GM12878 (cell line): ENCODE measurements at regions of chr1 and their contacts with region 1.

Region 1: GRCh38 chr1:183070923-183071618 is 47.9 kb downstream of the LAMC1 start:
- DNase-seq: peak; percentile 94
- ATAC-seq: peak; percentile 90
- H3K4me3 ChIP-seq: peak overlapping the region; percentile 64
- H3K27ac ChIP-seq: peak overlapping the region; percentile 82
- H3K4me1 ChIP-seq: peaks cover 27% of the 10 kb centered on the region; the same call in 1 of the 2 replicates
- H3K27me3 ChIP-seq: no peaks in the 10 kb centered on the region
- CTCF ChIP-seq: peak in 1 of 3 experiments; percentile 36; a peak in 2 of 6 replicates
- EP300 ChIP-seq: peak; percentile 66 to 67; a peak in 2 of 4 replicates
- POLR2A ChIP-seq: no peak
- RAD21 ChIP-seq: peak; percentile 32

Region 2: GRCh38 chr1:183030053-183030452 is 41.0 kb before region 1 on chr1:
- CTCF ChIA-PET with region 1: interaction called, 58 read pairs
- POLR2A ChIA-PET with region 1: interaction called, 21 read pairs
- RAD21 ChIA-PET with region 1: interaction called, 104 read pairs
- SMC1A ChIA-PET with region 1: interaction called, 92 read pairs
- in situ Hi-C with region 1: no loop called
- intact Hi-C with region 1: loop called (anchors 2 kb)
- DNase-seq: no peak
- ATAC-seq: peak; percentile 30
- H3K4me3 ChIP-seq: no peak overlapping the region
- H3K27ac ChIP-seq: no peak overlapping the region
- H3K4me1 ChIP-seq: peaks cover 36% of the 10 kb centered on the region
- H3K27me3 ChIP-seq: no peaks in the 10 kb centered on the region
- CTCF ChIP-seq: no peak
- EP300 ChIP-seq: no peak
- POLR2A ChIP-seq: no peak
- RAD21 ChIP-seq: no peak

Region 3: GRCh38 chr1:183058851-183059502 is 12.1 kb before region 1 on chr1:
- CTCF ChIA-PET with region 1: interaction called, 18 read pairs
- POLR2A ChIA-PET with region 1: interaction called, 4 read pairs
- RAD21 ChIA-PET with region 1: interaction called, 10 read pairs
- SMC1A ChIA-PET with region 1: interaction called, 6 read pairs
- in situ Hi-C with region 1: no loop called
- intact Hi-C with region 1: no loop called
- DNase-seq: no peak
- ATAC-seq: no peak
- H3K4me3 ChIP-seq: no peak overlapping the region
- H3K27ac ChIP-seq: no peak overlapping the region
- H3K4me1 ChIP-seq: peaks cover 14% of the 10 kb centered on the region
- H3K27me3 ChIP-seq: no peaks in the 10 kb centered on the region
- CTCF ChIP-seq: no peak
- EP300 ChIP-seq: no peak
- POLR2A ChIP-seq: no peak
- RAD21 ChIP-seq: no peak

Region 4: GRCh38 chr1:183101841-183102276 is 30.8 kb after region 1 on chr1:
- CTCF ChIA-PET with region 1: interaction called, 4 read pairs
- POLR2A ChIA-PET with region 1: no interaction called
- RAD21 ChIA-PET with region 1: interaction called, 4 read pairs
- SMC1A ChIA-PET with region 1: interaction called, 19 read pairs
- in situ Hi-C with region 1: no loop called
- intact Hi-C with region 1: no loop called
- DNase-seq: no peak
- ATAC-seq: peak; percentile 90
- H3K4me3 ChIP-seq: no peak overlapping the region
- H3K27ac ChIP-seq: no peak overlapping the region
- H3K4me1 ChIP-seq: peaks cover 8% of the 10 kb centered on the region; the same call in 1 of the 2 replicates
- H3K27me3 ChIP-seq: no peaks in the 10 kb centered on the region
- CTCF ChIP-seq: no peak
- EP300 ChIP-seq: no peak
- POLR2A ChIP-seq: no peak
- RAD21 ChIP-seq: no peak

Region 5: DNA sequence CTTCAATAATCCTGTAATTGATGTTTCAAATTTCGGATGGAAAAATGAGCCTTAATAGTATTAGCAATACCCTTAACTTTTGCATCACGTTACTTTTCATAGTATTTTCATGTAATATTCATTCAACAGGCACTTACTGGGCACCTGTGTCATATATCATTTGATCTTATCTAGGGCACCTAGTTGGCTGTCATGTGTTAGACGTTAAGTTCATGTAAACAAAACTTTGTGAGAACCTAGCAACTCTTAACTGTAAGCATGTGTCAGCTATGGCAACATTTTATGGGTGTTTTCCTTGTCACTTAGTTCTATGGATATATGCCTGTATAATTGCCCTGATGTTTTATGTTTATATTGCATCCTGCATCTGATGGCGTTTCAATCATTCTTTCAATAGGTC is 115.8 kb after region 1 on chr1:
- CTCF ChIA-PET with region 1: no interaction called
- POLR2A ChIA-PET with region 1: no interaction called
- RAD21 ChIA-PET with region 1: no interaction called
- SMC1A ChIA-PET with region 1: no interaction called
- in situ Hi-C with region 1: no loop called
- intact Hi-C with region 1: no loop called
- DNase-seq: no peak
- ATAC-seq: no peak
- H3K4me3 ChIP-seq: no peak overlapping the region
- H3K27ac ChIP-seq: no peak overlapping the region
- H3K4me1 ChIP-seq: no peaks in the 10 kb centered on the region
- H3K27me3 ChIP-seq: no peaks in the 10 kb centered on the region
- CTCF ChIP-seq: no peak
- EP300 ChIP-seq: no peak
- POLR2A ChIP-seq: no peak
- RAD21 ChIP-seq: no peak